Sigmoid colon (tissue), 7 donors: ENCODE measurements at regions of chr12 and their contacts with region 1.

Region 1: DNA sequence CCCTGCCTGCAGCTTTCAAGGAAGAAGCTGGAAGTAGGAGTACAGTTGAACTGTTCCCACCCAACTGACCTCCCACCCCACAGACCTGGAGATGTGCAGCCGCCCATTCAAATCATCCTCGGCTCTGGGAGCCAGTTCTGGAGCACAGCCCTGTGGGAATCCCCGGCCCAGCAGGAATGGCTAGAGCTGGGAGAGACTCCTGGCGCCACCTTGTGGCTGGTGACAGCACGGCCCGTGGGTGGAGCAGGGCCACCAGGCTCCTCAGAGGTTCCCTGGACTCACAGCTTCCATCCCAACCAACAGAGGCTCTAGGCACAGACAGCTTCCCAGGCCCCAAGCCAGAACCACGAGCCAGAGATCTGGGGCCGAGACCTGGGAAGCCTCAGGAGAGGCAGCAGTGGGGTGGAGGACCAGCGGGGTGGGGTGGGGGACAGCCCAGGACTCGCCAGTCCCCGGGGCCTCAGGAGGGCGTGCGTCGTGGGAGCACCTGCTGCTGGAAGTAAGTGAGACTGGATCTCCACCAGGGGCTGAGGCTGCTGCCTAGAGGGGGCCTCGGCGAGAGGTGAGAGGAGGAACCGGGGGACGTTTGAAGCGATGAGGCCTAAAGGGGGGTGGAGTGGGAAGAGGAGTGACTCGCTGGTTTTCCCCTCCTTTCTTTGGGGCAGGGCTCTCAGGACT is 43.4 kb downstream of the RNF34 start:
- DNase-seq: peak; percentile 93
- H3K4me3 ChIP-seq: no peak overlapping the region
- H3K27ac ChIP-seq: peak overlapping the region in 3 of 4 donors; percentile 69 to 79 (median 70)
- H3K4me1 ChIP-seq: peaks cover 0 to 32% (median 28%) of the 10 kb centered on the region in 4 donors
- H3K27me3 ChIP-seq: no peaks in the 10 kb centered on the region
- CTCF ChIP-seq: peak; percentile 71 to 93 (median 84)
- EP300 ChIP-seq: no peak
- POLR2A ChIP-seq: no peak

Region 2: GRCh38 chr12:121248622-121249021 is 194.7 kb before region 1 on chr12:
- intact Hi-C with region 1: no loop called
- DNase-seq: no peak
- H3K4me3 ChIP-seq: no peak overlapping the region
- H3K27ac ChIP-seq: no peak overlapping the region
- H3K4me1 ChIP-seq: no peaks in the 10 kb centered on the region
- H3K27me3 ChIP-seq: no peaks in the 10 kb centered on the region
- CTCF ChIP-seq: no peak
- EP300 ChIP-seq: no peak
- POLR2A ChIP-seq: no peak

Region 3: DNA sequence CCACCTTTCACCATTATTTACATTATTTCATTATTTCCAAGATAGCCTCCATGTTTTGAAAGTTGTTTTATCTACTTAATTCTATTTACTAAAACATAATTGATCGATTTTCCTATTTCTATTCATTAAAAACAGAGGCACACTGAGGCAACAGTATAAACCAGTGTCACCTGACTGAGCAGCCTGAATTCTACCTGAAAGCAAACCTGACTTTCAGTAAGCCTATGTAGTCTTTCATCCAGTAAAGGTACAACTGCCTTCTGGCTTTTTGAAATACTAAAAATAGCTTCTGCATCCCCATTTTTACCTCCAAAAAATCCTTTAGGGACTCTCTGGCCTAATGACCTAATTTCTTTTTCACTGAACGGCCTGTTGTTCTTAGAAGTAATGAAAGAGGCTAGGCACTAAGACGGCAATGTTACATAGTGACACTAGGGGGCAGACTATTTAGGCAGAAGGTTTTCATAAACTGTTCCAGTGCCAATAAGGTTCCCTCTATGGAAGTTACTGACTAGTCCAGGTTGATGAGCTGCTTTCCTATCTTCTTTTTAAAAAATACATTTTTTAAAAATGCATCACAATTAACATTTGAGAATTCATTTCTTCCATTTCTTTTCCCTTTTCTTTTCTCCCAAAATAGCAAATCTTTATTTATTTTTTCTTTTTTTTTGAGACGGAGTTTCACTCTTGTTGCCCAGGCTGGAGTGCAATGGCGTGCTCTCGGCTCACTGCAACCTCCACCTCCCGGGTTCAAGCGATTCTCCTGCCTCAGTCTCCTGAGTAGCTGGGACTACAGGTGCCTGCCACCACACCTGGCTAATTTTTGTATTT is 108.6 kb before region 1 on chr12:
- intact Hi-C with region 1: loop called (anchors 1 kb)
- DNase-seq: no peak
- H3K4me3 ChIP-seq: no peak overlapping the region
- H3K27ac ChIP-seq: no peak overlapping the region
- H3K4me1 ChIP-seq: peaks cover 0 to 5% (median 0%) of the 10 kb centered on the region in 4 donors
- H3K27me3 ChIP-seq: no peaks in the 10 kb centered on the region
- CTCF ChIP-seq: peak; percentile 36 to 86 (median 76)
- EP300 ChIP-seq: no peak
- POLR2A ChIP-seq: no peak

Region 4: GRCh38 chr12:121351820-121352681 is 91.3 kb before region 1 on chr12 and contains the start of gene ANAPC5:
- intact Hi-C with region 1: loop called (anchors 5 kb)
- DNase-seq: peak; percentile 98
- H3K4me3 ChIP-seq: peak within 1 kb of the TSS; percentile 64 to 87 (median 76)
- H3K27ac ChIP-seq: peak within 1 kb of the TSS; percentile 79 to 85 (median 82)
- H3K4me1 ChIP-seq: peaks cover 0 to 28% (median 18%) of the 10 kb centered on the region in 4 donors
- H3K27me3 ChIP-seq: no peaks in the 10 kb centered on the region
- CTCF ChIP-seq: no peak
- EP300 ChIP-seq: no peak
- POLR2A ChIP-seq: peak; percentile 57 to 66
- total RNA-seq, gene ANAPC5: 76.0 to 93.6 (median 85.9) TPM